SK-N-SH (cell line): ENCODE measurements at regions of chr3 and their contacts with region 1.

Region 1: DNA sequence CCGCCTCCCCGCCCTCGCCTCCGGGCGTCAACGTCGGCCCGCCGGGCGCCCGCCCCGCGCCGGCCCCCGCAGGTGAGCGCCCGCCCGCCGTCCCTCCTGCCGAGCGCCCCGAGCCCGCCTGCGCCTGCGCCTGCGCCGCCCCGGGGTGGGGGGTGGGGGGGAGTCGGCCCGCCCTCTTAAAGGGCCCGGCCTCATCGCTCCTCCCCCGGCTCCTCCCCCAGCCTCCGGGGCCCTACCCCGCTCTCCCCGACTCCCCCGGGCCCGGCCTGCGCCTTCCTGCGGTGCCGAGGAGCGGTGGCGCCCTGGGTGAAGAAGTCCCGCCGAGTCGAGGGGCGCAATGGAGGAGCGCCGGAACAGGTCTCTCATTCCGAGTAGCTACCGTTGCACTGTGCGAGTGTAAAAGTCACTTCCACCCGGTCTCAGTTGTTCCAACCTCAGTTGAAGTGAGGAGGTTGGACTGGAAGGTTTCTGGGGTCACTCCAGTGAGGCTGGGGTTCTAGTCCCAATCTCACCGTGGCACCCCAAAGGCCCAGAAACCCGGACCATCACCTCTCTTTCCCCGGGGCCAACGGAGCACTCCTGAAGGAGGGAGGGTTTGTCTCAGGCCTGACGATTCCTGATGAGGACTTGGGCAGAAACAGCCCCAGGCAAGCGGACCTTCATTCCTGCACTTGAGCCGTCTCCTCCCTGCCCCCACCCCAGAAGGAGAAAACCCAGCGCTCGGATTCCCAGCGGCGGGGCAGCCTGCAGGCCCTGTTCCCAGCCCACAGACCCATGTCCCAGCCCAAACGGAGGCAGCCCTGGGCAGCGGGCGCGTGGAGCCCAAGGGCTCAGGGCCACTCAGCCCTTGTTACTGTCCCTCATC is 1.5 kb upstream of the TNK2 start:
- DNase-seq: peak; percentile 99
- H3K4me3 ChIP-seq: peak overlapping the region in 1 of 2 experiments; percentile 72; a peak in 3 of 4 replicates
- H3K27ac ChIP-seq: peak overlapping the region in 1 of 2 experiments; percentile 58; a peak in 1 of 4 replicates
- H3K4me1 ChIP-seq: peaks cover 14 to 32% of the 10 kb centered on the region in 2 experiments; a peak in 2 of 4 replicates
- H3K27me3 ChIP-seq: no peaks in the 10 kb centered on the region
- CTCF ChIP-seq: no peak
- EP300 ChIP-seq: no peak
- RAD21 ChIP-seq: no peak

Region 2: DNA sequence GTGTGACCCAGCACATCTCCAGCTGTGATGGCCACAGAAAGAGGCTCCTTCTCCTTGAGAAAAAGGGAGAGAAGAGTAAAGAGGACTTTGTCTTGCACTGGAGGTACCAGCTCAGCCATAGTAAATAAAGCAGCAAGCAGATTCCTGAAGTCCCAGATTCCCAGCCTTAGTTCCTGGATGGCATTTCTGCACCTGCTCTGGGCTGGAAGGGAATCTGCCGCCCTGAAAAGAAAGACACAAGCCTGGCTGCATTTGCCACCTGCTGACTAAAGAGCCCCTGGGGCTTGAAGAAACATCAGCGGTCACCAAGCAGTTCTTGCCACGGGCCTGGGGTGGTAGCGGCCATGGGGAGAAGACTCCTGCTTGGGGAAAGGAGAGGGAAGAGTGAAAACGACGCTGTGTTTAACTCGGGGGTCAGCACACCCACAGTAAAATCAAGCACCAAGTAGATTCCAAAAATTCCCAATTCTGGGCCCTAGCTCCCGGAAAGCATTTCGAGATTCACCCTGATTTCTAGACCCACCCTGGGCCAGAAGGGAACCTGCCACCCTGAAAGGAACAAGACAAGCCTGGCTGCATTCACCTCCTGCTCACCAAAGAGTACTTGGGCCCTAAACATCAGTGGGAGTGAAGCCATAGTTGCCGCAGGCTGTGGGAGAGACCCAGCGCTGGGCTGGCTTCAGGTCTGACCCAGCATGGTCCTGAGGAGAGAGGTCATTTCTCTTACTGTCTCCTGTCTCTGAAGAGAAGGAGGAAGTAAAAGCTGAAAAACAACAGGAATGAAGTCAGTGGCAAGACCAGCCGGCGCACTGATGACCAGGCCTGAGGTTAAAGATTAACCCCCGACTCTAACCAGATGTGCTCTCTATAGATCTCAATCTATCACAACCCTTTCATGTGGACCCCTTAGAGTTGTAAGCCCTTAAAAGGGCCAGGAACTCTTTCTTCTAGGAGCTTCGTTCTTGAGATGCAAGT is 22.9 kb after region 1 on chr3:
- CTCF ChIA-PET with region 1: interaction called, 19 read pairs
- POLR2A ChIA-PET with region 1: no interaction called
- DNase-seq: no peak
- H3K4me3 ChIP-seq: no peak overlapping the region
- H3K27ac ChIP-seq: no peak overlapping the region
- H3K4me1 ChIP-seq: no peaks in the 10 kb centered on the region; a peak in 1 of 4 replicates
- H3K27me3 ChIP-seq: no peaks in the 10 kb centered on the region
- CTCF ChIP-seq: no peak
- EP300 ChIP-seq: no peak
- RAD21 ChIP-seq: no peak

Region 3: DNA sequence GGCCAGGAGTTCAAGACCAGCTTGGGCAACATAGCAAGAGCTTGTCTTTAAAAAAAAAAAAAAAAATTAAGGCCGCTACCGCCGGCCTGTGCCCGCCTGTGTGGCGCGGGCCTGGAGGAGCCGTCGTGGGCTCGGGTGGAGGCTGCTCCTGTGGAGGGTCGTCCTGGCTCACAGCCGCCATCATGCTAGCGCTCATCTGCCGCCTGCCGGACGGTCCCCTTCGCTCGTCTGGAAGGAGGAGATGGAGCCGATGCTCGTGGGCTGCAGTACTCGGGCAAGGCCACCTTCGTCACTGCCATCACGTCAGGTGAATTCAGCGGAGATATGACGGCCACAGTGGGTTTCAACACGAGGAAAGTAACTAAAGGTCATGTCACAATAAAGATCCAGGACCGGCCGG is 134.6 kb after region 1 on chr3:
- CTCF ChIA-PET with region 1: no interaction called
- POLR2A ChIA-PET with region 1: no interaction called
- DNase-seq: no peak
- H3K4me3 ChIP-seq: no peak overlapping the region
- H3K27ac ChIP-seq: no peak overlapping the region
- H3K4me1 ChIP-seq: no peaks in the 10 kb centered on the region
- H3K27me3 ChIP-seq: no peaks in the 10 kb centered on the region
- CTCF ChIP-seq: no peak
- EP300 ChIP-seq: no peak
- RAD21 ChIP-seq: no peak